ENCODE measurements at regions of chr7 and their contacts with region 1.

Region 1: GRCh38 chr7:106071356-106071998 is 40.6 kb downstream of the SYPL1 start:
- DNase-seq: peak; percentile 64
- H3K4me3 Mint-ChIP-seq: peak overlapping the region; percentile 70
- H3K27ac Mint-ChIP-seq: peak overlapping the region; percentile 98
- H3K4me1 Mint-ChIP-seq: peaks cover 62% of the 10 kb centered on the region
- H3K27me3 Mint-ChIP-seq: no peaks in the 10 kb centered on the region

Region 2: DNA sequence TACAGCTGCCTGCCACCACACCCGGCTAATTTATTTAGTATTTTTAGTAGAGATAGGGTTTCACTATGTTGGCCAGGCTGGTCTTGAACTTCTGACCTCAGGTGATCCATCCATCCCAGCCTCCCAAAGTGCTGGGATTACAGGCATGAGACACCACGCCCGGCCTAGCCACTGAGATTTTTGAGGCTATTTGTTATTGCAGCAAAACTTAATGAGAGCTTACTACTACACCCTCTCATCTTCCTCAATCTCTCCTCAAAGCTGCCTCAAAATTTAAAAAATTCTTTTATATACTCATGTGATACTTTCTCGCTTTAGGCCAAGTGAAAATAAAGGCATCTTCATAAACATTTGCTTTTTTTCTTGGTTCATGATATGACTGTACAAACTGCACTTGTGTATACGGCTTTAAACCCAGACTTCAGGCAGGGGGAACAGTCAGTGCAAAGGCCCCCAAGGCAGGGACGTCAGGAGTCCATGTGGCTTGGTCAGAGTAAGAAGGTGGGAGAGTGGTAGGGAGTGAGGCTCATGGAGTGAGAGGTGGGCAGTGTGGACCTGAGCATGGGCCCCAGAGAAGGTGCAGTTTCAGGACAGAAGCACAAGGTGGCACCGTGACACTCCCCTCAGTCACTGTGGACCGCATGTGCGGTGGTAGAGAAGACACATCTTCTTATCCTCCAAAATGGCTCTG is 14.8 kb before region 1 on chr7:
- CTCF ChIA-PET with region 1: interaction called, 27 read pairs
- POLR2A ChIA-PET with region 1: no interaction called
- DNase-seq: peak; percentile 75
- H3K4me3 Mint-ChIP-seq: no peak overlapping the region
- H3K27ac Mint-ChIP-seq: no peak overlapping the region
- H3K4me1 Mint-ChIP-seq: peaks cover 26% of the 10 kb centered on the region
- H3K27me3 Mint-ChIP-seq: peaks cover 5% of the 10 kb centered on the region

Region 3: GRCh38 chr7:106112117-106112971 is 40.9 kb after region 1 on chr7 and contains the start of gene SYPL1:
- CTCF ChIA-PET with region 1: interaction called, 12 read pairs
- POLR2A ChIA-PET with region 1: interaction called, 7 read pairs
- DNase-seq: peak; percentile 93
- H3K4me3 Mint-ChIP-seq: peak within 1 kb of the TSS; percentile 87
- H3K27ac Mint-ChIP-seq: peak within 1 kb of the TSS; percentile 94
- H3K4me1 Mint-ChIP-seq: peaks cover 49% of the 10 kb centered on the region
- H3K27me3 Mint-ChIP-seq: peaks cover 2% of the 10 kb centered on the region
- total RNA-seq, gene SYPL1: 36.7 to 40.3 TPM

Region 4: DNA sequence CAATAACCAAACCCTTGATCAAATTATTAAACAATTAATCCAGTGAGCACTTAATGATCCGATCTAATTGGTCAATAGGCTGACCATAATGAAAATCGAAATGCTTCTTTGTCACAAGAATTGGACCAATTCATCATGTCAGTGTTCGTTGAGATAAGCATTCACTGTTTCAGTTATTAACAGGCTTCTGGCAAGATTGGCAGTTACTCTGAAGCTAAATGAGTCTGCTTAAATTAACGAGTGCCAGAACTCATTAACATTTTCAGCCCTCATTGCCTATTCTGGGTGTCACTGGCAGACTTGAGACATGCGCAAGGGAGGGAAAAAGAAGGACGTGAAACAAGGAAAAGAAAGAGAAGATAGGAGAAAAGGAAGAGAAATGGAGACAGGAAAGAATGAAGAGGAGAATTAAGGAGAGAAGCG is 1762.2 kb after region 1 on chr7:
- CTCF ChIA-PET with region 1: no interaction called
- POLR2A ChIA-PET with region 1: no interaction called
- DNase-seq: no peak
- H3K4me3 Mint-ChIP-seq: no peak overlapping the region
- H3K27ac Mint-ChIP-seq: no peak overlapping the region
- H3K4me1 Mint-ChIP-seq: no peaks in the 10 kb centered on the region
- H3K27me3 Mint-ChIP-seq: peaks cover 10% of the 10 kb centered on the region